Naive thymus-derived CD4-positive, alpha-beta T cell (primary cell): ENCODE measurements at regions of chr11 and their contacts with region 1.

Region 1: DNA sequence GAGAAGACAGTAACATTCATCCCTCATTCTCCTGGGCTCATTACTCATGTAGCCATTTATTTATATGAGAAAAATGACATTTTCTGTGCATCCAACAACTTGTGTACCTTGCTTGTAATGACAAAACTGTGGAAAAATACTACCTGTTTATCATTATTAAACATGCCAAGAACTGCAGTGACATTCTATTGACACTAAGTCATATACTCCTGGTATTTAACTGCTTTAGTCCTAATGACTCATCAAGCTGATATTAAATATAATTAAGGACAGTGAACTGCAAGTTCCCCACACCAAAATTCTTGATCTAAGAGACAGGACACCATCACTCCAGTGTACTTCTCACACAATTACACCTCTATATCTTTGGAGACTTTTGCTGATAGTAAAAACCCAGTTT is 1328.7 kb upstream of the RAG2 start:
- DNase-seq: no peak
- ATAC-seq: no peak
- H3K4me3 ChIP-seq: no peak overlapping the region
- H3K4me3 Mint-ChIP-seq: no peak overlapping the region
- H3K27ac ChIP-seq: no peak overlapping the region
- H3K27ac Mint-ChIP-seq: no peak overlapping the region
- H3K4me1 ChIP-seq: no peaks in the 10 kb centered on the region
- H3K4me1 Mint-ChIP-seq: no peaks in the 10 kb centered on the region
- H3K27me3 ChIP-seq: no peaks in the 10 kb centered on the region
- H3K27me3 Mint-ChIP-seq: no peaks in the 10 kb centered on the region

Region 2: DNA sequence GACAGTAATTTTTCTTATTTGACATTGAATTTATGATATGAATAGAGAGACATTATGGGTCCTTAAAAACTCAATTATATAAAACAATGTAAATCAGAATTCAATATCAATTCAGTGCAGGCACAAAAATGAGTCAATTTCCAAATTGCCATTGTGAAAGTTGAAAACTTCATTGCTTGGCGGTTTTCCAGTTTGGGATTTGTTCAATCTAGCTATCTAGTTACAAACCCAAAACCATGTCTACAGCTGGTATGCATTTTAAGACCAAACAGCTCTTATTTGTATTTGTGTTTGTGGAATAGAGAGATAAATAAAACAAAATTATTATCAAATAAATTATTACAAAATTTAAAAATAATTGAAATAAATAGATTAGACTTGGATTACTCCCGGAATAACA is 122.1 kb before region 1 on chr11:
- CTCF ChIA-PET with region 1: no interaction called
- POLR2A ChIA-PET with region 1: no interaction called
- intact Hi-C with region 1: no loop called
- DNase-seq: no peak
- ATAC-seq: no peak
- H3K4me3 ChIP-seq: no peak overlapping the region
- H3K4me3 Mint-ChIP-seq: no peak overlapping the region
- H3K27ac ChIP-seq: no peak overlapping the region
- H3K27ac Mint-ChIP-seq: no peak overlapping the region
- H3K4me1 ChIP-seq: no peaks in the 10 kb centered on the region
- H3K4me1 Mint-ChIP-seq: peaks cover 0 to 3% (median 0%) of the 10 kb centered on the region in 7 donors
- H3K27me3 ChIP-seq: no peaks in the 10 kb centered on the region
- H3K27me3 Mint-ChIP-seq: no peaks in the 10 kb centered on the region

Region 3: DNA sequence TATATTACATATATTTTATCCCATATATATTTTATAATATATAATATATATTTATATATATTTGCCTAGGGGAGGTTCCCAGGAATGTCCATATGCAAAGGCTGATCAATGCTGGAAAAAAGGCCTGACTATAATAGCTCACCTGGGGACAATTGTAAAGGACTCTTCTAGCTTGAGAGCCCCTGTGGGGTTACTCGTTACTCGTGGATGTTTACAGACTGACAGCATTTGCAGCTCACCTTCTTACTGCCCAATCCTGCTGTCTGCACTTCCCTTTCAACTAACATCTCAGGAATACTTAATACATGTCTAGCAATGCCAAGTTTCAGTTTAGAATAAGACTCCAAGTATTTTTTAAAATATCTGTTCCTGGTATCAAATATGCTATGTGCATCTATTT is 36.7 kb after region 1 on chr11:
- CTCF ChIA-PET with region 1: no interaction called
- POLR2A ChIA-PET with region 1: no interaction called
- intact Hi-C with region 1: no loop called
- DNase-seq: no peak
- ATAC-seq: no peak
- H3K4me3 ChIP-seq: no peak overlapping the region
- H3K4me3 Mint-ChIP-seq: no peak overlapping the region
- H3K27ac ChIP-seq: no peak overlapping the region
- H3K27ac Mint-ChIP-seq: no peak overlapping the region
- H3K4me1 ChIP-seq: no peaks in the 10 kb centered on the region
- H3K4me1 Mint-ChIP-seq: peaks cover 0 to 2% (median 0%) of the 10 kb centered on the region in 7 donors
- H3K27me3 ChIP-seq: no peaks in the 10 kb centered on the region
- H3K27me3 Mint-ChIP-seq: no peaks in the 10 kb centered on the region

Region 4: GRCh38 chr11:38438091-38438490 is 511.3 kb after region 1 on chr11:
- CTCF ChIA-PET with region 1: no interaction called
- POLR2A ChIA-PET with region 1: no interaction called
- intact Hi-C with region 1: loop called in 1 of 2 experiments (anchors 10 kb)
- DNase-seq: no peak
- ATAC-seq: no peak
- H3K4me3 ChIP-seq: no peak overlapping the region
- H3K4me3 Mint-ChIP-seq: no peak overlapping the region
- H3K27ac ChIP-seq: no peak overlapping the region
- H3K27ac Mint-ChIP-seq: no peak overlapping the region
- H3K4me1 ChIP-seq: no peaks in the 10 kb centered on the region
- H3K4me1 Mint-ChIP-seq: no peaks in the 10 kb centered on the region
- H3K27me3 ChIP-seq: no peaks in the 10 kb centered on the region
- H3K27me3 Mint-ChIP-seq: no peaks in the 10 kb centered on the region